ENCODE measurements at regions of chr10 and their contacts with region 1.

Region 1: DNA sequence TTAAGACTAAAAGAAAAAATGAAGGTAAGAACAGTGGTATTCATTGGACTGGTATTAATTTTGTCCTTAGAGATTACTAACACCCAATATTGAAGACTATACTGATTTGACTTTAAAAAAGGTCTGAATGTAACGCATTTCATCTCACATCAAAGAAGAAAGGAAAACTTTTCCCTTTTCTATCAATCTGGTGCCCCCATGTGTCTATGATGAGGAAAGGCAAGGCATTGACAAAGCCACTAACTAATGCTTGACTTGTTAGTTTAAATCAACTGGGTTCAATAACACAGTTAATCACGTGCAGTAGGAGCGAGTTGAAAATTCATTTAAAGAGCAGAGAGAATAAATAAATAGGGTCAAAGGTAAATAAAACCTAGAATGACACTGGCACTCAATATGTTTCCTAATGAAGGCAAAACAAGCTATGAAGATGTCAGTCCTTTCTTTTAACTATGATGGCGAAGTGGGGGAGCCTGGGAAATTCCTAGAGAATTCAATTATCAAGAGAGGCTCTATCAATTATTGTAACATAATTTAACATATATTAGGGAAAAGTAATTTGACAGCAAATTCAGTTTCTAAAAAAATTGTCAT is 180.9 kb downstream of the ANK3 start:
- DNase-seq: peak; percentile 55
- H3K4me3 ChIP-seq: no peak overlapping the region
- H3K27ac ChIP-seq: no peak overlapping the region
- H3K4me1 ChIP-seq: peaks cover 8% of the 10 kb centered on the region
- H3K27me3 ChIP-seq: no peaks in the 10 kb centered on the region
- CTCF ChIP-seq: peak; percentile 53 to 56
- POLR2A ChIP-seq: no peak

Region 2: DNA sequence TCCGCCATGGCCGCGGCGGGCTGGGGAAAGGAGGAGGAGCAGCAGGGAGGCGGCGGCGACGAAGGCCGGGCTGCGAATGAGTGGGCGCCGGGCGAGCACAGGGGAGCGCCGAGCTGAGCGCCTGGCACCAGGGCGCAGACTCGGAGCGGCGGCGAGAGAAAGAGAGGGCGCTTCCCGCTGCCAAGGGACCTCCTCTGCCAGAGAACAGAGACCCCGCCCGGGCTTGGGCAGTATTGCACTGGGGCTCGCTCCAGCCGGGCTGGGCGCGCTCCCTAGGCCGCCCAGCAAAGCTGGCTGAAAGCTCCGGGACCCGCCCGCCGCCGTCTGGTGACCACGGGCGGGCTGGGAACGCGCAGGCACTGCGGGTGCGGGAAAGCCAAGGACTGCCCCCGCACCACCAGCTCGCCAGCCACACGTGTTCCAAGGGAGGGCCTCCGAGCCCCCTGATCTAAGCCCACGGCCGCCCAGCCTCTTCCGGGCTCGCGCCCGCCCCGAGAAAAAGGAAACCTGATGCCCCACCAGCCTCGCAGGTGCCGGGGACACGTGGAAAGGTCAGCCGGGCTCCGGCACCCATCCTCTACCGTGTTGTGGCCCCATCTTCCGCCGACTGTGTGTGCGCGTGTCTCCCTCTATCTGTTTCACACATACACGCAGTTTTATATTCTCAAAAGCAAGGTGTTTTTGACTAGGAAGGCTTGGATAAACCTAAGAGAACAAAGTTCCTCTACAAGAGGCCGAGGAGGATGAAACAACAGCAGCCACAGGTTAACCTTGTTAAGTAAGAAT is 302.2 kb before region 1 on chr10 and contains the start of gene CCDC6:
- CTCF ChIA-PET with region 1: no interaction called
- POLR2A ChIA-PET with region 1: no interaction called
- dilution Hi-C with region 1: no loop called
- intact Hi-C with region 1: loop called (anchors 10 kb)
- DNase-seq: peak; percentile 96
- H3K4me3 ChIP-seq: peak within 1 kb of the TSS; percentile 68 to 81 (median 77)
- H3K27ac ChIP-seq: peak within 1 kb of the TSS; percentile 75
- H3K4me1 ChIP-seq: peaks cover 32% of the 10 kb centered on the region
- H3K27me3 ChIP-seq: no peaks in the 10 kb centered on the region
- CTCF ChIP-seq: peak; percentile 64 to 82
- POLR2A ChIP-seq: peak; percentile 75
- total RNA-seq, gene CCDC6: 36.8 TPM in 2 replicates

Region 3: GRCh38 chr10:60140651-60141632 is 67.8 kb before region 1 on chr10:
- CTCF ChIA-PET with region 1: no interaction called
- POLR2A ChIA-PET with region 1: no interaction called
- dilution Hi-C with region 1: no loop called
- intact Hi-C with region 1: no loop called
- DNase-seq: no peak
- H3K4me3 ChIP-seq: no peak overlapping the region
- H3K27ac ChIP-seq: no peak overlapping the region
- H3K4me1 ChIP-seq: peaks cover 8% of the 10 kb centered on the region
- H3K27me3 ChIP-seq: no peaks in the 10 kb centered on the region
- CTCF ChIP-seq: no peak
- POLR2A ChIP-seq: no peak

Region 4: GRCh38 chr10:60163786-60164185 is 45.0 kb before region 1 on chr10:
- CTCF ChIA-PET with region 1: no interaction called
- POLR2A ChIA-PET with region 1: no interaction called
- dilution Hi-C with region 1: no loop called
- intact Hi-C with region 1: no loop called
- DNase-seq: no peak
- H3K4me3 ChIP-seq: no peak overlapping the region
- H3K27ac ChIP-seq: no peak overlapping the region
- H3K4me1 ChIP-seq: no peaks in the 10 kb centered on the region
- H3K27me3 ChIP-seq: no peaks in the 10 kb centered on the region
- CTCF ChIP-seq: no peak
- POLR2A ChIP-seq: no peak

Region 5: GRCh38 chr10:60175441-60175971 is 33.3 kb before region 1 on chr10:
- CTCF ChIA-PET with region 1: interaction called, 12 read pairs
- POLR2A ChIA-PET with region 1: no interaction called
- dilution Hi-C with region 1: no loop called
- intact Hi-C with region 1: loop called (anchors 2 kb)
- DNase-seq: peak; percentile 82
- H3K4me3 ChIP-seq: no peak overlapping the region
- H3K27ac ChIP-seq: no peak overlapping the region
- H3K4me1 ChIP-seq: peaks cover 12% of the 10 kb centered on the region
- H3K27me3 ChIP-seq: no peaks in the 10 kb centered on the region
- CTCF ChIP-seq: no peak
- POLR2A ChIP-seq: no peak

Region 6: GRCh38 chr10:60314069-60314940 is 105.5 kb after region 1 on chr10:
- CTCF ChIA-PET with region 1: interaction called, 11 read pairs
- POLR2A ChIA-PET with region 1: no interaction called
- dilution Hi-C with region 1: no loop called
- intact Hi-C with region 1: no loop called
- DNase-seq: peak; percentile 88
- H3K4me3 ChIP-seq: peak overlapping the region in 1 of 3 experiments; percentile 8
- H3K27ac ChIP-seq: peak overlapping the region; percentile 94
- H3K4me1 ChIP-seq: peaks cover 39% of the 10 kb centered on the region
- H3K27me3 ChIP-seq: no peaks in the 10 kb centered on the region
- CTCF ChIP-seq: no peak
- POLR2A ChIP-seq: no peak

Region 7: GRCh38 chr10:60434418-60435046 is 225.8 kb after region 1 on chr10:
- CTCF ChIA-PET with region 1: interaction called, 97 read pairs
- POLR2A ChIA-PET with region 1: no interaction called
- dilution Hi-C with region 1: no loop called
- intact Hi-C with region 1: loop called (anchors 1 kb)
- DNase-seq: peak; percentile 78
- H3K4me3 ChIP-seq: no peak overlapping the region
- H3K27ac ChIP-seq: no peak overlapping the region
- H3K4me1 ChIP-seq: peaks cover 9% of the 10 kb centered on the region
- H3K27me3 ChIP-seq: no peaks in the 10 kb centered on the region
- CTCF ChIP-seq: peak; percentile 38 to 47
- POLR2A ChIP-seq: no peak

Measured in endothelial cell of umbilical vein (primary cell).